HepG2 (cell line): ENCODE measurements at regions of chr6 and their contacts with region 1.

Region 1: DNA sequence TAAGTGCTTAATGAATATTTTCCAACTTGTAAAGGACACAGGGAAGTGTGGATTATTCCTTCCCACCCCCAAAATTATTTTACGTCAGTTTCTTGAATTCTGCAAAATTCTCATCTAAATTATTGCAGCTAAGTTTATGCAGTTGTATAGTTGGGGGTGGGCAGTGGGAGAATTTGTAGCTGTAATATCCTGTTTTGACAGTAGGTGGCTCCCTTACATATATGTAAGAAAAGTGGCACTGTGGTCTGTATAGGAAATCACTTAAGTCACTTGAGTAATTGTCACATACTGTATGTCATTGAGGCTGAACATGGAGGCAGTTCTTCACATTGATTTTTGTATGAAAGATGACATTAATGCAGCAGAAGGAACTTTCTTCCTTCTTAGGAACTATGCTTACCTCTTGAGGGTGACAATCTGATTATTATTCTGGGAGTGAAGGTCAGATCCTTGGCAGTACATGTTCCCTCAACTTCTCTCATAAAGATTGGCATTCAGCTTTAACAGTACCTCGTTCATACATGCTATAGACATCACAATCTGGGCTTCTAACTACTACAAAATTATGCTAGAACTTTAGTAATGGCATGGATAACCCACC is 14.7 kb upstream of the CFAP206 start:
- DNase-seq: peak; percentile 59
- ATAC-seq: peak; percentile 83
- H3K4me3 ChIP-seq: no peak overlapping the region
- H3K27ac ChIP-seq: no peak overlapping the region
- H3K4me1 ChIP-seq: no peaks in the 10 kb centered on the region
- H3K27me3 ChIP-seq: no peaks in the 10 kb centered on the region
- CTCF ChIP-seq: peak; percentile 73
- EP300 ChIP-seq: no peak
- POLR2A ChIP-seq: no peak
- RAD21 ChIP-seq: peak; percentile 55; the same call in 1 of the 2 replicates

Region 2: GRCh38 chr6:87139236-87139635 is 253.9 kb before region 1 on chr6:
- CTCF ChIA-PET with region 1: interaction called, 5 read pairs
- POLR2A ChIA-PET with region 1: no interaction called
- in situ Hi-C with region 1: no loop called
- intact Hi-C with region 1: loop called (anchors 1 kb)
- DNase-seq: peak; percentile 48
- ATAC-seq: peak; percentile 86
- H3K4me3 ChIP-seq: no peak overlapping the region
- H3K27ac ChIP-seq: no peak overlapping the region
- H3K4me1 ChIP-seq: peaks cover 10% of the 10 kb centered on the region; the same call in 1 of the 2 replicates
- H3K27me3 ChIP-seq: no peaks in the 10 kb centered on the region
- CTCF ChIP-seq: peak; percentile 80
- EP300 ChIP-seq: no peak
- POLR2A ChIP-seq: no peak
- RAD21 ChIP-seq: peak; percentile 58; the same call in 1 of the 2 replicates

Region 3: GRCh38 chr6:87200469-87201174 is 192.5 kb before region 1 on chr6:
- CTCF ChIA-PET with region 1: no interaction called
- POLR2A ChIA-PET with region 1: no interaction called
- in situ Hi-C with region 1: no loop called
- intact Hi-C with region 1: no loop called
- DNase-seq: no peak
- ATAC-seq: no peak
- H3K4me3 ChIP-seq: no peak overlapping the region
- H3K27ac ChIP-seq: no peak overlapping the region
- H3K4me1 ChIP-seq: no peaks in the 10 kb centered on the region
- H3K27me3 ChIP-seq: no peaks in the 10 kb centered on the region
- CTCF ChIP-seq: no peak
- EP300 ChIP-seq: no peak
- POLR2A ChIP-seq: no peak
- RAD21 ChIP-seq: no peak

Region 4: GRCh38 chr6:87243812-87244211 is 149.3 kb before region 1 on chr6:
- CTCF ChIA-PET with region 1: no interaction called
- POLR2A ChIA-PET with region 1: no interaction called
- in situ Hi-C with region 1: no loop called
- intact Hi-C with region 1: loop called (anchors 1 kb)
- DNase-seq: no peak
- ATAC-seq: no peak
- H3K4me3 ChIP-seq: no peak overlapping the region
- H3K27ac ChIP-seq: no peak overlapping the region
- H3K4me1 ChIP-seq: no peaks in the 10 kb centered on the region
- H3K27me3 ChIP-seq: no peaks in the 10 kb centered on the region
- CTCF ChIP-seq: no peak
- EP300 ChIP-seq: no peak
- POLR2A ChIP-seq: no peak
- RAD21 ChIP-seq: no peak

Region 5: GRCh38 chr6:87322304-87323212 is 70.6 kb before region 1 on chr6 and contains the start of gene SMIM8:
- CTCF ChIA-PET with region 1: interaction called, 3 read pairs
- POLR2A ChIA-PET with region 1: no interaction called
- in situ Hi-C with region 1: no loop called
- intact Hi-C with region 1: loop called (anchors 1 kb)
- DNase-seq: peak; percentile 73
- ATAC-seq: peak; percentile 99
- H3K4me3 ChIP-seq: peak within 1 kb of the TSS; percentile 99 to 100 (median 100)
- H3K27ac ChIP-seq: peak within 1 kb of the TSS; percentile 60
- H3K4me1 ChIP-seq: peaks cover 8% of the 10 kb centered on the region
- H3K27me3 ChIP-seq: peaks cover 0 to 2% of the 10 kb centered on the region in 2 experiments; a peak in 1 of 5 replicates
- CTCF ChIP-seq: peak; percentile 94
- EP300 ChIP-seq: 0 out of 4 replicates have a peak, but pooled peaks of 1 of the 2 experiments have one; percentile 17
- POLR2A ChIP-seq: peak; percentile 81 to 97
- RAD21 ChIP-seq: peak; percentile 80
- total RNA-seq, gene SMIM8: 10.0 and 12.2 TPM in 2 replicates

Region 6: GRCh38 chr6:87333591-87334181 is 59.4 kb before region 1 on chr6:
- CTCF ChIA-PET with region 1: no interaction called
- POLR2A ChIA-PET with region 1: no interaction called
- in situ Hi-C with region 1: no loop called
- intact Hi-C with region 1: no loop called
- DNase-seq: no peak
- ATAC-seq: no peak
- H3K4me3 ChIP-seq: no peak overlapping the region
- H3K27ac ChIP-seq: no peak overlapping the region
- H3K4me1 ChIP-seq: no peaks in the 10 kb centered on the region
- H3K27me3 ChIP-seq: no peaks in the 10 kb centered on the region
- CTCF ChIP-seq: no peak
- EP300 ChIP-seq: no peak
- POLR2A ChIP-seq: no peak
- RAD21 ChIP-seq: no peak

Region 7: GRCh38 chr6:87357479-87358196 is 35.5 kb before region 1 on chr6:
- CTCF ChIA-PET with region 1: no interaction called
- POLR2A ChIA-PET with region 1: no interaction called
- in situ Hi-C with region 1: no loop called
- intact Hi-C with region 1: no loop called
- DNase-seq: no peak
- ATAC-seq: no peak
- H3K4me3 ChIP-seq: no peak overlapping the region
- H3K27ac ChIP-seq: no peak overlapping the region
- H3K4me1 ChIP-seq: no peaks in the 10 kb centered on the region
- H3K27me3 ChIP-seq: no peaks in the 10 kb centered on the region
- CTCF ChIP-seq: no peak
- EP300 ChIP-seq: no peak
- POLR2A ChIP-seq: no peak
- RAD21 ChIP-seq: no peak

Region 8: DNA sequence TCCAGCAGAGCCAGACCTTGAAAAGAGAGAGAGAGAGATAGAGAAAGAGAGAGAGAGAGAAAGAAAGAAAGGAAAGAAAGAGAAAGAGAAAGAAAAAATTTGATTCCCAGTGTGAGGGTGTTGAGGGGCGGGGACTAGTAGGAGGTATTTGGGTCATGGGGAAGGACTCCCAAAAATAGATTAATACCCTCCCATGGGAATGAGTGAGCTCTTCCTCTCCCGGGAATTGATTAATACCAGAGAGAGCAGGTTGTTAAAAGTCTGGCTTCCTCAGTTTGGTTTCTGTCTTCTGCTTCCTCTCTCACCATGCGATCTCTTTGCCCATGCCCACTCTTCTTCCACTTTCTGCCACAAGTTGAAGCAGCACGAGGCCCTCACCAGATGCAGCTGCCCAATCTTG is 14.2 kb before region 1 on chr6:
- CTCF ChIA-PET with region 1: no interaction called
- POLR2A ChIA-PET with region 1: no interaction called
- in situ Hi-C with region 1: no loop called
- intact Hi-C with region 1: no loop called
- DNase-seq: no peak
- ATAC-seq: no peak
- H3K4me3 ChIP-seq: no peak overlapping the region
- H3K27ac ChIP-seq: no peak overlapping the region
- H3K4me1 ChIP-seq: no peaks in the 10 kb centered on the region
- H3K27me3 ChIP-seq: no peaks in the 10 kb centered on the region
- CTCF ChIP-seq: no peak
- EP300 ChIP-seq: no peak
- POLR2A ChIP-seq: no peak
- RAD21 ChIP-seq: no peak

Region 9: DNA sequence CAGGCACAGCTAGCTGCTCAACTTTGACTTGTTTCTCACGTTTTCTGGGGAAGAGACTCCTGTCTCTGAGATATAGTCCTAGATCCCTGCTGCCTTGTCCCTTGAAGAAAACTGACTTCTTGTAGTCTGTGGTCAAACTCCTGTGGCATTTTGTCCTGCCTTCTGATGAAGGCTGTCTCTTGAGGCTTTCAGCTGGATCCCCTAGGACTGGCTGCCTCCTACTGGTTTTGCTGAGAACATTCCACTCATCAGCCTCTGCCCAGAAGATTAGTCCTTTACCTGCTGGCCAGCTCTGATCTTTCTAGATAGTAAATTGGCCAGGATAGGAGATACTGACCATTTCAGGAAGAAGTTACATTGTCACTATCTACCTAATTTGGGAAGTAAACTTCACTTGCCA is 844.9 kb after region 1 on chr6:
- CTCF ChIA-PET with region 1: interaction called, 4 read pairs
- POLR2A ChIA-PET with region 1: no interaction called
- in situ Hi-C with region 1: no loop called
- intact Hi-C with region 1: loop called (anchors 2 kb)
- DNase-seq: peak; percentile 33
- ATAC-seq: peak; percentile 89
- H3K4me3 ChIP-seq: no peak overlapping the region
- H3K27ac ChIP-seq: no peak overlapping the region
- H3K4me1 ChIP-seq: no peaks in the 10 kb centered on the region
- H3K27me3 ChIP-seq: no peaks in the 10 kb centered on the region
- CTCF ChIP-seq: peak; percentile 77
- EP300 ChIP-seq: no peak
- POLR2A ChIP-seq: no peak
- RAD21 ChIP-seq: peak; percentile 44; the same call in 1 of the 2 replicates